ENCODE measurements at regions of chr6 and their contacts with region 1.

Region 1: DNA sequence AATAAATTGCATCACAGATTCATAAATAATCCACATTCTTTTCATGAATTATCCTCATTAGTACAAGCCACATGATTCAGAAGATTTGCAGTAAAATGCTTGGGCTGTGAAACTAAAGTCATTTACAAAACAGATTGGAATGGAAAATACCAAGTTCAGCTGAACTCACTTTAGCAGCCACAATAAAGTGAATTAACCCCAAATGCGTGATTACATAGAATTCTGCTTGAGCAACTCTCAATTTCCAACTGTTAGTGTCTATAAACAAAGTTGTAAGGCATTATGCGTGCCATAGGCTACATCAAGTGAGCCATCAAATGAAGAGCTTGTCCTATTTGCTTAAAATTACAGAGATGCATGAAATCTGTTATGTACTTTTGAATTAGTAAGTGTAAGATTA is 60.4 kb upstream of the GFRAL start:
- DNase-seq: no peak
- H3K4me3 Mint-ChIP-seq: no peak overlapping the region
- H3K27ac Mint-ChIP-seq: no peak overlapping the region
- H3K4me1 Mint-ChIP-seq: no peaks in the 10 kb centered on the region
- H3K27me3 Mint-ChIP-seq: no peaks in the 10 kb centered on the region
- CTCF ChIP-seq: no peak

Region 2: GRCh38 chr6:55276745-55277530 is 10.0 kb after region 1 on chr6:
- CTCF ChIA-PET with region 1: interaction called, 12 read pairs
- POLR2A ChIA-PET with region 1: interaction called, 3 read pairs
- intact Hi-C with region 1: no loop called
- DNase-seq: peak; percentile 72
- H3K4me3 Mint-ChIP-seq: no peak overlapping the region
- H3K27ac Mint-ChIP-seq: no peak overlapping the region
- H3K4me1 Mint-ChIP-seq: no peaks in the 10 kb centered on the region
- H3K27me3 Mint-ChIP-seq: no peaks in the 10 kb centered on the region
- CTCF ChIP-seq: peak; percentile 64